ENCODE measurements at regions of chr6 and their contacts with region 1.

Region 1: GRCh38 chr6:18503593-18504231 is 116.6 kb downstream of the RNF144B start:
- DNase-seq: peak; percentile 57
- H3K27ac ChIP-seq: no peak overlapping the region
- CTCF ChIP-seq: peak; percentile 94

Region 2: GRCh38 chr6:18302561-18303439 is 200.9 kb before region 1 on chr6:
- CTCF ChIA-PET with region 1: no interaction called
- POLR2A ChIA-PET with region 1: no interaction called
- DNase-seq: no peak
- H3K27ac ChIP-seq: no peak overlapping the region
- CTCF ChIP-seq: no peak

Region 3: GRCh38 chr6:18323935-18324705 is 179.6 kb before region 1 on chr6:
- CTCF ChIA-PET with region 1: interaction called, 22 read pairs
- POLR2A ChIA-PET with region 1: no interaction called
- DNase-seq: peak; percentile 62
- H3K27ac ChIP-seq: no peak overlapping the region
- CTCF ChIP-seq: peak; percentile 69

Measured in RWPE1 (cell line).